Mammary epithelial cell (primary cell): ENCODE measurements at regions of chr5 and their contacts with region 1.

Region 1: GRCh38 chr5:127875235-127876021 is 172.2 kb downstream of the CCDC192 start:
- DNase-seq: peak; percentile 51
- H3K4me3 ChIP-seq: no peak overlapping the region
- H3K27ac ChIP-seq: no peak overlapping the region
- H3K4me1 ChIP-seq: peaks cover 18% of the 10 kb centered on the region
- H3K27me3 ChIP-seq: no peaks in the 10 kb centered on the region
- CTCF ChIP-seq: peak; percentile 10 to 18

Region 2: DNA sequence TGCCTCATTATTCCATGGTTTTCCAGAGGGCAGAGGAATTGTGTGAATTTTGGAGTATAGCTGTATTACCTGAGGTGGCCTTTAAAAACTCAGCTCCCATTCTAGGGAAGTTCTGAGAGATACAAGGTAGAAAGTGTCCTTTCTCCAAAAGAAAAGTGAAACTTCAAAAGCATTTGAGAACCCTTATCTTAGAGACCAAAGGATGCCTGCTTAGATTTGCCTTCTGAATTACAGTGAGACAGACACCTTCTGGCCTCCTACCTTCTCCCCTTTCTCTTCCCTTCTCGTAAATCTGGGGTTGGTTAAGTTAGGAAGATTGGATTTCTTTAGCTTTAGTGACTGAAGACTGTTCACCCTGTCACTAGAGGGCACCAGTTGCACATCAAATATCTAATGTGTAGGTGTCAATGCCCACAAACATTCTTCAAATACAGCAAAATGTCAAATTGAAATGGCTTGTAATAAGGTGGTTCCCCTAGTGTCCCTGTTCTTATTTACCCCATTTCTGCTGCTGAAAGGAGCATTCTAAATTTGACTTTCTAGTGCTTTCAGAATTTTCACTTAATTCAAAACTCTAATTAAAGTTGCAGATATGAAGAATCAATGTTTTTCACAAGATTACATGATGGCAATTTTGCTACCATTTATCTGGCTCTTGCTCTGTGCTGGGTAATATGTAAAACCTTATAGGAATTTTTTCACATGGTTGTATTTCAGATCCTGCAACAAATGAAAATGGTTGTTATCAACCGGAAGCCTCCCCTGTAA is 311.2 kb before region 1 on chr5:
- CTCF ChIA-PET with region 1: no interaction called
- dilution Hi-C with region 1: no loop called
- in situ Hi-C with region 1: no loop called
- intact Hi-C with region 1: loop called (anchors 1 kb)
- DNase-seq: peak; percentile 44
- H3K4me3 ChIP-seq: no peak overlapping the region
- H3K27ac ChIP-seq: no peak overlapping the region
- H3K4me1 ChIP-seq: no peaks in the 10 kb centered on the region
- H3K27me3 ChIP-seq: no peaks in the 10 kb centered on the region
- CTCF ChIP-seq: peak; percentile 62 to 73

Region 3: DNA sequence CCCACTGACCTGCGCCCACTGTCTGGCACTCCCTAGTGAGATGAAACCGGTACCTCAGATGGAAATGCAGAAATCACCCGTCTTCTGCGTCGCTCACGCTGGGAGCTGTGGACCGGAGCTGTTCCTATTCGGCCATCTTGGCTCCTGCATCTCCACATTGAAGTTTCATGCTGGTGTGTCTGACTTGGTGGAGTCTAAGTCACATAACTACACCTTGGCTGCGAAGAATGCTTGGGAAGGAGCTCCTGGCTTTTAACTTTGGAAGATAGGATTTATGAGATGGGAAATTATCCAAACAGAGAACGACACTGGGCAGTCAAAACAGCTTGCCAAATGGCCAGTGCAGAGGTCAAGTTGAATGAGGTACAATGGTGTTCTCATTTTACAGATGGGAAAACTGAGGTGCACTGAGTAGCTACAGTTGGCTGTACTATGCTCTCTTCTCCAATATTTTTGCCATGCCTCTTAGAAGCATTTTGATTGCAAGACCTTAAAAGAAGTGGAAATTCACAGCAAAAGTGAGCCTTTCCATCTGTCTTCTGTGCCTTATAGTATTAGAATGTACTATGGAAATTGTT is 135.5 kb before region 1 on chr5:
- CTCF ChIA-PET with region 1: no interaction called
- dilution Hi-C with region 1: no loop called
- in situ Hi-C with region 1: no loop called
- intact Hi-C with region 1: no loop called
- DNase-seq: no peak
- H3K4me3 ChIP-seq: no peak overlapping the region
- H3K27ac ChIP-seq: no peak overlapping the region
- H3K4me1 ChIP-seq: no peaks in the 10 kb centered on the region
- H3K27me3 ChIP-seq: peaks cover 5% of the 10 kb centered on the region
- CTCF ChIP-seq: no peak

Region 4: DNA sequence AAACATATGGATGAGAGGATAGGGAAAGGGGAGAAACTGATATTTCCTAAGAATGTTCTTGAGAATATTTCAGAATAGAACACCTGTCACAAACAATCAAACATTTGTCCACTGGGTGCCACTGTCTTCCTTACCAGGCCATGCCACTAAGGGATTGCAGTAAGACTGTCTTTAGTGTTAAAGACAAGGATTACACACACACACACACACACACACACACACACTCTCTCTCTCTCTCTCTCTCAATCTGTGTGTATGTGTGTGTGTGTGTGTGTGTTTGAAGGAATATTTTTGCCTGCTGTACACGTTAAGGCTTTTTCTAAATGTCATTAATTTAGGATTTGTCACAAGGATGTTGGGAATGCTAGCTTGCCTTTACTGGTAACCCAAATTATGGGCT is 117.9 kb before region 1 on chr5:
- CTCF ChIA-PET with region 1: interaction called, 3 read pairs
- dilution Hi-C with region 1: no loop called
- in situ Hi-C with region 1: no loop called
- intact Hi-C with region 1: loop called (anchors 1 kb)
- DNase-seq: peak; percentile 53
- H3K4me3 ChIP-seq: no peak overlapping the region
- H3K27ac ChIP-seq: no peak overlapping the region
- H3K4me1 ChIP-seq: no peaks in the 10 kb centered on the region
- H3K27me3 ChIP-seq: peaks cover 2% of the 10 kb centered on the region
- CTCF ChIP-seq: peak; percentile 43 to 73

Region 5: DNA sequence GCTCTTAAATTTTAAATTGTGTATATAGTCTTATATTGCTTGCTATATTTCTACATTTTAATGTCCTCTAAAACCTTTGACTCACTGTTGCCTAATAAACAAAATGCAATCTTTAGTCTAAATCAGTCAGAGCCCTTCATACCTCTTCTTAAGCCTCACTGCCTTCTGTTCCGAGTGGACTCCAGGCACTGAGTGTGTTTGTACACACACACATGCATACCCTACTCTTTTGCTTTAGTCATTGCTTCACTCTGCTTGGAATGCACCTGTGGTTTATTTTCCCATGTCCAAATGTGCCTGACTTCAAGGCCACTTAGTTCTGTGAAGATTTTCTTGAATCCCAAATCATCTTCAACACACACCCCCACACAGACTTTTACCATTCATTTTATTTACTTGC is 269.1 kb after region 1 on chr5:
- CTCF ChIA-PET with region 1: no interaction called
- dilution Hi-C with region 1: no loop called
- in situ Hi-C with region 1: no loop called
- intact Hi-C with region 1: no loop called
- DNase-seq: peak; percentile 16
- H3K4me3 ChIP-seq: no peak overlapping the region
- H3K27ac ChIP-seq: no peak overlapping the region
- H3K4me1 ChIP-seq: no peaks in the 10 kb centered on the region
- H3K27me3 ChIP-seq: no peaks in the 10 kb centered on the region
- CTCF ChIP-seq: no peak

Region 6: DNA sequence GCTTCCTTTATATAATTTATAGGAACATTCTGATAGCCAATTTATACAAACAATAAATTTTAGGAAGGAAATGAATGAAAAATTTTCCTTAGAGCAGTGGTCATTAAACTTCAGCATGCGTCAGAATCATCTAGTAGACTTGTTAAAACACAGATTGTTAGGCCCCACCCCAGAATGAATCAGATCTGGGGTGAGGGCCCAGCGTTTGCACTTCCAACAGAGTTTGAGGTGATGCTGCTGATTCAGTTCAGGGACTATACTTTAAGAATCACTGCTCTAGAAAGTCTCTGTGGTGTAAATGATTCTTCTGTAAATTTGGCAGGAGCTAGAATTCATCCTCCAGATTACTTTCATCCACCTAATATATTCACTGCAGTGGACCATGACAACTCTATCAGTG is 288.6 kb after region 1 on chr5:
- CTCF ChIA-PET with region 1: no interaction called
- dilution Hi-C with region 1: no loop called
- in situ Hi-C with region 1: no loop called
- intact Hi-C with region 1: loop called (anchors 1 kb)
- DNase-seq: peak; percentile 86
- H3K4me3 ChIP-seq: no peak overlapping the region
- H3K27ac ChIP-seq: no peak overlapping the region
- H3K4me1 ChIP-seq: no peaks in the 10 kb centered on the region
- H3K27me3 ChIP-seq: no peaks in the 10 kb centered on the region
- CTCF ChIP-seq: no peak